ENCODE measurements at regions of chr9 and their contacts with region 1.

Region 1: GRCh38 chr9:21709464-21710058 is 92.9 kb upstream of the MTAP start:
- DNase-seq: peak; percentile 88
- ATAC-seq: peak; percentile 87
- H3K4me3 Mint-ChIP-seq: no peak overlapping the region
- H3K27ac Mint-ChIP-seq: no peak overlapping the region
- H3K4me1 Mint-ChIP-seq: peaks cover 16% of the 10 kb centered on the region
- H3K27me3 Mint-ChIP-seq: no peaks in the 10 kb centered on the region
- CTCF ChIP-seq: peak; percentile 83

Region 2: GRCh38 chr9:21465859-21466518 is 243.6 kb before region 1 on chr9:
- CTCF ChIA-PET with region 1: interaction called, 17 read pairs
- POLR2A ChIA-PET with region 1: no interaction called
- intact Hi-C with region 1: no loop called
- DNase-seq: no peak
- ATAC-seq: peak; percentile 77
- H3K4me3 Mint-ChIP-seq: no peak overlapping the region
- H3K27ac Mint-ChIP-seq: no peak overlapping the region
- H3K4me1 Mint-ChIP-seq: no peaks in the 10 kb centered on the region
- H3K27me3 Mint-ChIP-seq: no peaks in the 10 kb centered on the region
- CTCF ChIP-seq: peak; percentile 73

Region 3: GRCh38 chr9:21576331-21577189 is 133.0 kb before region 1 on chr9:
- CTCF ChIA-PET with region 1: interaction called, 11 read pairs
- POLR2A ChIA-PET with region 1: interaction called, 3 read pairs
- intact Hi-C with region 1: no loop called
- DNase-seq: peak; percentile 74
- ATAC-seq: peak; percentile 80
- H3K4me3 Mint-ChIP-seq: peak overlapping the region; percentile 34
- H3K27ac Mint-ChIP-seq: peak overlapping the region; percentile 66
- H3K4me1 Mint-ChIP-seq: peaks cover 34% of the 10 kb centered on the region
- H3K27me3 Mint-ChIP-seq: peaks cover 2% of the 10 kb centered on the region
- CTCF ChIP-seq: no peak

Region 4: GRCh38 chr9:21605489-21605931 is 104.1 kb before region 1 on chr9:
- CTCF ChIA-PET with region 1: no interaction called
- POLR2A ChIA-PET with region 1: no interaction called
- intact Hi-C with region 1: no loop called
- DNase-seq: no peak
- ATAC-seq: no peak
- H3K4me3 Mint-ChIP-seq: no peak overlapping the region
- H3K27ac Mint-ChIP-seq: no peak overlapping the region
- H3K4me1 Mint-ChIP-seq: peaks cover 24% of the 10 kb centered on the region
- H3K27me3 Mint-ChIP-seq: no peaks in the 10 kb centered on the region
- CTCF ChIP-seq: no peak

Region 5: DNA sequence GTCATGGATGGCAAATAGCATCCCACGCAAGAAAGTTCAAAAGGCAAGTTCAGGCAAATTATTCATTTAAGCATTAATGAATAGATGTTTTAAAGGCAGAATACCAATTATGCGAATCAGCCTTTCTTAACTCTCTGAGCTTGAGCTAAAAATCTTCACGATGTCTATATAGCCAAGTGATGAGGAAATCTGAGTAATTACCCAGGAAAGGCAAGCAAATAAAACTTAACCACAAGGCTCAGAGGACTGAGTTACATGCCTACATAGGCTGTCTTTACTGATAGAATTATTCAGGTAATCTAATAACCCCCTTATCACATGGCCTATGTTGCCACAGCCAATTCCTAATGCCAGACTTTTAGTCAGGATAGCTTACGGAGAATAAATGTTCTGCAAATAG is 27.9 kb before region 1 on chr9:
- CTCF ChIA-PET with region 1: interaction called, 14 read pairs
- POLR2A ChIA-PET with region 1: no interaction called
- intact Hi-C with region 1: no loop called
- DNase-seq: no peak
- ATAC-seq: no peak
- H3K4me3 Mint-ChIP-seq: no peak overlapping the region
- H3K27ac Mint-ChIP-seq: no peak overlapping the region
- H3K4me1 Mint-ChIP-seq: peaks cover 52% of the 10 kb centered on the region
- H3K27me3 Mint-ChIP-seq: no peaks in the 10 kb centered on the region
- CTCF ChIP-seq: no peak

Region 6: GRCh38 chr9:21688108-21689102 is 21.2 kb before region 1 on chr9:
- CTCF ChIA-PET with region 1: interaction called, 14 read pairs
- POLR2A ChIA-PET with region 1: no interaction called
- intact Hi-C with region 1: no loop called
- DNase-seq: peak; percentile 7
- ATAC-seq: peak; percentile 35
- H3K4me3 Mint-ChIP-seq: peak overlapping the region; percentile 10
- H3K27ac Mint-ChIP-seq: peak overlapping the region; percentile 75
- H3K4me1 Mint-ChIP-seq: peaks cover 56% of the 10 kb centered on the region
- H3K27me3 Mint-ChIP-seq: no peaks in the 10 kb centered on the region
- CTCF ChIP-seq: no peak

Region 7: GRCh38 chr9:21778306-21778705 is 68.7 kb after region 1 on chr9:
- CTCF ChIA-PET with region 1: interaction called, 13 read pairs
- POLR2A ChIA-PET with region 1: no interaction called
- intact Hi-C with region 1: no loop called
- DNase-seq: no peak
- ATAC-seq: peak; percentile 27
- H3K4me3 Mint-ChIP-seq: no peak overlapping the region
- H3K27ac Mint-ChIP-seq: no peak overlapping the region
- H3K4me1 Mint-ChIP-seq: peaks cover 3% of the 10 kb centered on the region
- H3K27me3 Mint-ChIP-seq: no peaks in the 10 kb centered on the region
- CTCF ChIP-seq: no peak

Region 8: DNA sequence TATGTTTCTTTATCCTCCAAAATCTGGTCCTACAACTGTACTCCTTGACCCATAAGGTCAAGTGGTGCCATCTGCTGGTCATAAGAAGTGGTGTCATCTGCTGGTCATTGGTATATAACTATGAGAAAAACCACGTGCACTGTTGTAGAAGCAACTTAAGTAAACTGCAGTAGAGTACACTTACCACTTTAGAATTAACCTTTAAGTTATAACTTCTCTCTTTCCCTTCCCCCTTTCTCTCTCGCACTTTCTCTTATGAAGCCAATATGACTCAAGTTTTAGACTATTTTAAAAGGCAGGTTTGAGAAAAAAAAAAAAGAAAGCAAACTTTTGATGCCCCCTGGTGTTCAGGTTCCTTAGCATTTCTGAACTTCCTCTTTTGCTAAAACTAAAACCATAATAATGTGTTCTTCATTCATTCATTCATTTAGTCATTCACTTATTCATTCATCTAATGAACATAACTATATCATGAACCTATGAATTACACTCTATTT is 80.0 kb after region 1 on chr9:
- CTCF ChIA-PET with region 1: interaction called, 39 read pairs
- POLR2A ChIA-PET with region 1: no interaction called
- intact Hi-C with region 1: loop called (anchors 1 kb)
- DNase-seq: peak; percentile 69
- ATAC-seq: peak; percentile 96
- H3K4me3 Mint-ChIP-seq: peak overlapping the region; percentile 70
- H3K27ac Mint-ChIP-seq: peak overlapping the region; percentile 83
- H3K4me1 Mint-ChIP-seq: peaks cover 3% of the 10 kb centered on the region
- H3K27me3 Mint-ChIP-seq: peaks cover 9% of the 10 kb centered on the region
- CTCF ChIP-seq: peak; percentile 95

Region 9: DNA sequence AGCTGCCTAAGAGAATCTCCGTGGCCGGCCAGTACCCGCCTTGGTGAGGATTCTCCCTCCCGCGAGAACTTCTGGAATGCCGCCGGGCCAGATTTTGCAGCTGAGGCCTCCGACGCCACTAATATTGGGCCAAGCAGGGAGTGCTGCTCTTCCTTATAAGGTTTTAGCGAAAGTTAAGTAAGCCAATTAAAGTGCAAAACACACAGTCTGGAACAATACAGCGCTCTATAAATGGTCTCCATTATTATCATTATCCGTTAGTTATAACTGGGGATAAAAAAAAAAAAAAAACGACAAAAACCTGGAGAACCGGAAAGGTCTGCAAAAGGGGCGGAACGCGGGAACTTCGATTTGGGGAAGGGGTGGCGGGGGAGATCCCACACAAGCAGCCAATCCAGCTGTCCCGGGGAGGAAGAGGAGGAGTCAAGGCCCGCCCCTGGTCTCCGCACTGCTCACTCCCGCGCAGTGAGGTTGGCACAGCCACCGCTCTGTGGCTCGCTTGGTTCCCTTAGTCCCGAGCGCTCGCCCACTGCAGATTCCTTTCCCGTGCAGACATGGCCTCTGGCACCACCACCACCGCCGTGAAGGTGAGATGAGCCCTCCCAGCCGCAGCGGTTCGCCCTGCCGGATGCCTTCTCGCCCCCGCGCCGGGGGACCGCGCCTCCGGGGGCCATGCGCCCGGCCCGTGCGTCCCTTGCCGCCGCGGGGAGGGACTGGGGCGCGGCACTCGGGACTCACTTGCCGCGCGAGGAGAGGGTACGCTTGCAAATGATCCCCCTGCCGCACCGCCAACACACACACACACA is 92.8 kb after region 1 on chr9 and contains the start of gene MTAP:
- CTCF ChIA-PET with region 1: no interaction called
- POLR2A ChIA-PET with region 1: no interaction called
- intact Hi-C with region 1: no loop called
- DNase-seq: peak; percentile 85
- ATAC-seq: peak; percentile 82
- H3K4me3 Mint-ChIP-seq: peak within 1 kb of the TSS; percentile 99
- H3K27ac Mint-ChIP-seq: peak within 1 kb of the TSS; percentile 99
- H3K4me1 Mint-ChIP-seq: peaks cover 38% of the 10 kb centered on the region
- H3K27me3 Mint-ChIP-seq: peaks cover 13% of the 10 kb centered on the region
- CTCF ChIP-seq: no peak
- total RNA-seq, gene MTAP: 70.2 to 73.9 TPM

Measured in activated CD8-positive, alpha-beta T cell treated with anti-CD3 and anti-CD28 coated beads for 36 hours (primary cell).